Esophagus muscularis mucosa (tissue), 4 donors: ENCODE measurements at regions of chr3 and their contacts with region 1.

Region 1: DNA sequence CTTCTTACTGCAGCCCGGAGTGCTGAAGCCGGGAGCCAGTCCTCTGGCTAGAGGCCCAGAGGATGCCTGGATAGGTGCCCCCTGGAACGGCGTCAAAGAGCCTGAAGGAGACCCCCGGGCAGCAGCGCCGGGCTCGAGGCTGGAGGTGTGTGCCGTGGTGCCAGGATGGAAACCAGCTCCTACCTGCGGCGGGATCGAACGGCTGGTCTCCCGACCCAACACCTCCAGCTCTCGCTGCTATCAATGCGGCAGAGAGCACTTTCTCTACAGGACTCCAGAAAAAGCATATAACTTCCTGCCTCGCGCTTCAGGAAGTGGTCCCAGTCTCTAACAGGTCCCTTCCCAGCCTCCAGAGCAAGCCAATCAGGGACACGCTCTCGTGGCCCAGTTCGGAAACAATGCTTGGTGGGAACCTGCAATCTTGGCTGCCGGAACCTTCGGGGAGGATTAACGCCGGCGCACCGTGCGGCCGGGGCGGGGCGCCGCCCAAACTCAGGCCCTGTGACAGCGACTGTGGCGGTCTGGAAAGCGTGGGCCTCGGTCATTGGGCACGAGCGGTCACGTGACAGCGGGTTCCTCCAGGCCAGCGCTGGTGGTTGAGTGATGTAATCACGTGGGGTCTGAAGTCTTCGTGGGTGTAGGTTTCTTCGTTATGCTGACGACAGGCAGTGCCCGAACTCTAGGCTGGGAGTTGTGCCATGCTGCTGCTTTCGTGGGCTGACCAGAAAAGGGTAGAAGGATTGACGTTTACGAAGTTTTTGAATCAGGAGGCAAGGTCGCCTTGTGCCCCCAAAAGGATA is at the start of gene SLC33A1:
- DNase-seq: peak; percentile 100
- H3K4me3 ChIP-seq: peak within 1 kb of the TSS; percentile 67 to 93 (median 84)
- H3K27ac ChIP-seq: peak within 1 kb of the TSS; percentile 89 to 93 (median 90)
- H3K4me1 ChIP-seq: peaks cover 38 to 53% (median 50%) of the 10 kb centered on the region in 4 donors
- H3K27me3 ChIP-seq: no peaks in the 10 kb centered on the region
- CTCF ChIP-seq: peak in 1 of 3 experiments; percentile 32
- EP300 ChIP-seq: no peak
- POLR2A ChIP-seq: no peak
- total RNA-seq, gene SLC33A1: 17.4 to 22.2 (median 19.8) TPM

Region 2: GRCh38 chr3:155805802-155806618 is 48.3 kb before region 1 on chr3 and contains the start of gene C3orf33:
- intact Hi-C with region 1: loop called (anchors 5 kb)
- DNase-seq: no peak
- H3K4me3 ChIP-seq: peak within 1 kb of the TSS; percentile 73 to 88 (median 83)
- H3K27ac ChIP-seq: peak within 1 kb of the TSS; percentile 80 to 89 (median 86)
- H3K4me1 ChIP-seq: peaks cover 4 to 11% (median 9%) of the 10 kb centered on the region in 4 donors
- H3K27me3 ChIP-seq: no peaks in the 10 kb centered on the region
- CTCF ChIP-seq: peak; percentile 78 to 92 (median 80)
- EP300 ChIP-seq: no peak
- POLR2A ChIP-seq: no peak
- total RNA-seq, gene C3orf33: 2.8 to 3.7 (median 3.1) TPM